Activated T-helper 1 cell treated with anti-CD3 and anti-CD28 coated beads, Interleukin-12 subunit alpha, Interleukin-12 subunit beta, Interleukin-2, Interleukin-4 antibody, amounts not matched to agents 30 ng/mL and 10 ng/mL and 1 ng/mL, durations not matched to agents 14 hours and 24 hours and 36 hours (primary cell): ENCODE measurements at regions of chrX and their contacts with region 1.

Region 1: GRCh38 chrX:110310896-110311295 is 7.0 kb downstream of the AMMECR1 start:
- DNase-seq: peak; percentile 24
- H3K4me3 Mint-ChIP-seq: peak overlapping the region; percentile 68
- H3K27ac Mint-ChIP-seq: peak overlapping the region; percentile 82
- H3K4me1 Mint-ChIP-seq: peaks cover 51% of the 10 kb centered on the region
- H3K27me3 Mint-ChIP-seq: no peaks in the 10 kb centered on the region

Region 2: GRCh38 chrX:110268886-110269285 is 42.0 kb before region 1 on chrX:
- intact Hi-C with region 1: loop called (anchors 5 kb)
- DNase-seq: no peak
- H3K4me3 Mint-ChIP-seq: no peak overlapping the region
- H3K27ac Mint-ChIP-seq: no peak overlapping the region
- H3K4me1 Mint-ChIP-seq: peaks cover 28% of the 10 kb centered on the region
- H3K27me3 Mint-ChIP-seq: no peaks in the 10 kb centered on the region